Psoas muscle (tissue), 8 donors: ENCODE measurements at regions of chr11 and their contacts with region 1.

Region 1: GRCh38 chr11:3217676-3218482 is 734 bp downstream of the MRGPRG start:
- DNase-seq: no peak
- ATAC-seq: peak in 3 of 4 donors; percentile 6 to 23 (median 7)
- H3K4me3 ChIP-seq: no peak overlapping the region
- H3K27ac ChIP-seq: no peak overlapping the region
- H3K4me1 ChIP-seq: no peaks in the 10 kb centered on the region
- H3K27me3 ChIP-seq: peaks cover 0 to 51% (median 20%) of the 10 kb centered on the region in 3 donors
- CTCF ChIP-seq: no peak

Region 2: GRCh38 chr11:3109921-3110706 is 107.8 kb before region 1 on chr11:
- intact Hi-C with region 1: loop called (anchors 1 to 2 kb)
- DNase-seq: peak; percentile 46 to 82
- ATAC-seq: peak; percentile 86 to 97 (median 96)
- H3K4me3 ChIP-seq: no peak overlapping the region
- H3K27ac ChIP-seq: no peak overlapping the region
- H3K4me1 ChIP-seq: no peaks in the 10 kb centered on the region
- H3K27me3 ChIP-seq: no peaks in the 10 kb centered on the region
- CTCF ChIP-seq: peak; percentile 78